PC-9 (cell line): ENCODE measurements at regions of chr2 and their contacts with region 1.

Region 1: GRCh38 chr2:61538200-61538919 is at the start of gene XPO1:
- DNase-seq: peak; percentile 96 to 100
- H3K4me3 ChIP-seq: peak within 1 kb of the TSS; percentile 94
- H3K27ac ChIP-seq: peak within 1 kb of the TSS; percentile 88
- H3K4me1 ChIP-seq: peaks cover 31% of the 10 kb centered on the region
- H3K27me3 ChIP-seq: no peaks in the 10 kb centered on the region
- CTCF ChIP-seq: no peak
- total RNA-seq, gene XPO1: 228 and 236 TPM in 2 replicates

Region 2: DNA sequence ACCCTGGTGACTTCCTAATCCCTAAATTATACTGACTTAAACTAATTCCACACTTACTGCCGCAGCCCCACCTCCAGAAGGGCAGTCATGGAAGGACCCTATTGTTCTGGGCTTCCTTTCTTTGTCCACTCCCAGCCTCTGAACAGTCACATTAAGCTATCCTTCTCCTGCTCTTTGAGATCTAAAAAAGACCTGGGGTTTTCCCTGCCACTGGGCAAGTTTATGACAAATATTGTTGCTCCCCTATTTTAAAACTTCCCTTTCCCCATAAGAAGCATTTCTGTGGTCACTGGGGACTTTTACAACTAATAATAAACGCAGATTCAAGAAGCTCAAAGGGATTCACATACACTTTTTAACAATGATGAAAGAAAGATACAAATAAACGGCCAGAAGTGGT is 47.0 kb after region 1 on chr2:
- CTCF ChIA-PET with region 1: no interaction called
- POLR2A ChIA-PET with region 1: interaction called, 14 read pairs
- intact Hi-C with region 1: no loop called
- DNase-seq: no peak
- H3K4me3 ChIP-seq: no peak overlapping the region
- H3K27ac ChIP-seq: no peak overlapping the region
- H3K4me1 ChIP-seq: no peaks in the 10 kb centered on the region
- H3K27me3 ChIP-seq: no peaks in the 10 kb centered on the region
- CTCF ChIP-seq: no peak

Region 3: GRCh38 chr2:61633250-61633649 is 94.9 kb after region 1 on chr2:
- CTCF ChIA-PET with region 1: interaction called, 3 read pairs
- POLR2A ChIA-PET with region 1: no interaction called
- intact Hi-C with region 1: loop called (anchors 1 kb)
- DNase-seq: no peak
- H3K4me3 ChIP-seq: no peak overlapping the region
- H3K27ac ChIP-seq: no peak overlapping the region
- H3K4me1 ChIP-seq: 0 out of 2 replicates have a peak, but pooled peaks cover 6% of the 10 kb centered on the region
- H3K27me3 ChIP-seq: no peaks in the 10 kb centered on the region
- CTCF ChIP-seq: peak; percentile 33; the same call in 1 of the 2 replicates

Region 4: DNA sequence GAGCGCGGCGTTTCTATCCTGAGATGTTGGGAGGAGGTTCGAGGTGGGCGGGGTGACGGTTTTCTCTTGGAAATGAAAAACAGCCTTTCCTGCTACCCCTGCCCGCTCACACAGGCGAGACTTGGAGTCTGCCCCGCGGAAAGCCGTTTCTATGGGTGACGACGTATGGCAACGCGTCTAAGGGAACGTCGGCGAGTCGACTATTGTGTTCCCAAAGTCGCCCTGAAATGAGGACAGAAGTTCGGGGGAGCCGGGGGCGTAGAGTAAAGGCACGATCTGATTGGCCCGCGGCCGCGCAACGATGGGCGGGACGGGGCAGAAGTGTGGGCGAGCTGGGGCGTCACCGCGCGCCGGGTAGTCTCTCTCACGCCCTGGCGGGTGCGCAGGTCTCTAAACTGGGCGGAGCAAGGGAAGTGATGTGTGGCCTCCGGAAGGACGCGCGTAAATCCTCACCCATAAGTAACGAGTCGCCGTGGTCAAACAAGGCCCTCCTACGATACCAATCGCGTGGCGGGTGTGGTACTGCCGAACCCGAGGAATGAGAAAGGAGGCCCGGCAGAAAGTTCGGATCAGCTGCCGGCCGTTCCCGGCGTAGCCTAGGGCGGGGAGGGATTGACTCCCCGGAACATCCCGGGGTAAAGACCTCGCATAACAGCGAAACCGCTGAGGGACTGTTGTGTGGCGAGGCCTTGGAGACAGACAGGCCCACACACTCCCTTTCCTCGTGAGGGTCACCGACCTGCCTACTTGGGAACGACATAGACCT is 225.9 kb after region 1 on chr2:
- CTCF ChIA-PET with region 1: no interaction called
- POLR2A ChIA-PET with region 1: interaction called, 7 read pairs
- intact Hi-C with region 1: loop called (anchors 1 kb)
- DNase-seq: peak; percentile 95 to 99
- H3K4me3 ChIP-seq: peak overlapping the region; percentile 77
- H3K27ac ChIP-seq: peak overlapping the region; percentile 98
- H3K4me1 ChIP-seq: peaks cover 45% of the 10 kb centered on the region
- H3K27me3 ChIP-seq: no peaks in the 10 kb centered on the region
- CTCF ChIP-seq: no peak

Region 5: GRCh38 chr2:61888267-61889055 is 350.1 kb after region 1 on chr2 and contains the start of gene CCT4:
- CTCF ChIA-PET with region 1: no interaction called
- POLR2A ChIA-PET with region 1: interaction called, 6 read pairs
- intact Hi-C with region 1: loop called (anchors 10 kb)
- DNase-seq: peak; percentile 64 to 90
- H3K4me3 ChIP-seq: peak within 1 kb of the TSS; percentile 97
- H3K27ac ChIP-seq: peak within 1 kb of the TSS; percentile 94
- H3K4me1 ChIP-seq: peaks cover 30% of the 10 kb centered on the region
- H3K27me3 ChIP-seq: no peaks in the 10 kb centered on the region
- CTCF ChIP-seq: no peak
- total RNA-seq, gene CCT4: 265 and 350 TPM in 2 replicates